Activated CD4-positive, alpha-beta T cell treated with anti-CD3 and anti-CD28 coated beads, Interleukin-2, amount 10 ng/mL, durations not matched to agents 24 days and 14 days (primary cell): ENCODE measurements at regions of chr10 and their contacts with region 1.

Region 1: DNA sequence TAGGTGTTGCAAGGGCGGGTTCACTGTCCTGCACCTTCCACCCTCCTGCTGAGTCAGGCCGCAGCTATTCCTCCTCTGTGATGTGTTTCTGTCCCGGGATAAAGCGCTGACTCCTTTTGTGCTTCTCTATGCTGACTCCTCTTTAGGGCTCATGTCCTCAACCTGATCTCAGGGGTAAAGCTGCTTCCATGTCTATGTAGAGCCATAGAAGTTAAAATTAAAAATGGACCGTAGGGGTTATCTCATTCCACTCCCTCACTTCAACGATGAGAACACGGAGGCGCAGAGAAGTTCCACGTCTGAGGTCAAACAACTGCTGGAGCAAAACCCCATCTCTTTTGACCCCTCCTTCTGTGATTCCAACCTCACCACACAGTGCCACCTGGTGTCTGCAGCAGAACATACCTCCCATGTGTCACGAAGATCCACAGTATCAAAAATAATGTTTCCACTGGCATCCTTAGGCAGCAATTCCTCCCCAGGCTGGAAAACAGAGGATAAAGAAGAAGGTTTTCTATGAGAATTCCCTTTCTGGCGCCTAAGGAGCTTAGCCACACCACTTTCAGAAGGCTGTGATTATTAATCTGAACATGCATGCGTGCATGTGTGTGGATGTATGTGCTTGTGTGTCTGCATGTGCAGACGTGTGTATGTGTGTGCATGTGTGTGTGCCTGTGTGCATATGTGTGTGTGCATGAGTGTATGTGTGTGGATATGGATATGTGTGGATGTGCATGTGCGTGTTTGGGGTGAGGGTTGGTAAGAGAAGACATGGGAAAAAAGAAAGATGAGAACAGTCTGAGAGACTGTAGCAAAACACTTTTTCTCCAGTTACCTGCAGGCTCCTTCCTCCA is 81.2 kb upstream of the UCN3 start:
- DNase-seq: peak; percentile 89
- H3K4me3 Mint-ChIP-seq: peak overlapping the region; percentile 44
- H3K27ac Mint-ChIP-seq: peak overlapping the region; percentile 82
- H3K4me1 Mint-ChIP-seq: peaks cover 29% of the 10 kb centered on the region
- H3K27me3 Mint-ChIP-seq: peaks cover 5% of the 10 kb centered on the region

Region 2: GRCh38 chr10:5094265-5095205 is 189.0 kb before region 1 on chr10 and contains the start of gene AKR1C3:
- intact Hi-C with region 1: loop called (anchors 5 kb)
- DNase-seq: peak; percentile 74
- H3K4me3 Mint-ChIP-seq: peak within 1 kb of the TSS; percentile 56
- H3K27ac Mint-ChIP-seq: no peak within 1 kb of the TSS
- H3K4me1 Mint-ChIP-seq: peaks cover 5% of the 10 kb centered on the region
- H3K27me3 Mint-ChIP-seq: peaks cover 12% of the 10 kb centered on the region
- total RNA-seq, gene AKR1C3: not detected in 2 replicates

Region 3: DNA sequence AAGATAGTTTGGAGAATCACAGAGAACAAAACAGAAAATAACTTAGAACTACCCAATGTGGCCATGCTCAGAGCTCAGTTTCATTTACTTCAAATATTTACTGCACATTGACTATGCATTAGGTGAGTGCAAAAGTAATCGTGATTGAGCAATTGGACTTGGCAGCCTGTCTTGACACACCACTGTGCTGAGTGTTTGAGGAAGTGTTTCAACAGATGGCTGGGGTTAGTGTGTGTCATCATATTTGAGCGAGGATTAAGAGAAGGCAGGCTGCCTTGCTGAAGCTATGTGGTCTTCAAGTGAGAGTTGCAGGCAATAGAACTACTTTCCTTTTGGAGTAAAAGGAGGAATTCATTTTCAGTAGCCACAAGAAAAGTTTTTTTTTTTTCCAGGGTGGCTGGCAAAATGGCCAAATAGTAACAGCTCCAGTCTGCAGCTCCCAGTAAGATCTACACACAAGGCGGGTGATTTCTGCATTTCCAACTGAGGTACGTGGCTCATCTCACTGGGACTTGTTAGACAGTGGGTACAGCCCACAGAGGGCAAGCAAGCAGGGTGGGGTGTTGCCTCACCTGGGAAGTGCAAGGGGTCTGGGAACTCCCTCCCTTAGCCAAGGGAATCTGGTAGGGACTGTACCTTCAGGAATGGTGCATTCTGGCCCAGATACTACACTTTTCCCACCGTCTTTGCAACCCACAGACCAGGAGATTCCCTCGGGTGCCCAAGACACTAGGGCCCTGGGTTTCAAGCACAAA is 49.2 kb before region 1 on chr10:
- intact Hi-C with region 1: no loop called
- DNase-seq: no peak
- H3K4me3 Mint-ChIP-seq: no peak overlapping the region
- H3K27ac Mint-ChIP-seq: no peak overlapping the region
- H3K4me1 Mint-ChIP-seq: no peaks in the 10 kb centered on the region
- H3K27me3 Mint-ChIP-seq: no peaks in the 10 kb centered on the region

Region 4: DNA sequence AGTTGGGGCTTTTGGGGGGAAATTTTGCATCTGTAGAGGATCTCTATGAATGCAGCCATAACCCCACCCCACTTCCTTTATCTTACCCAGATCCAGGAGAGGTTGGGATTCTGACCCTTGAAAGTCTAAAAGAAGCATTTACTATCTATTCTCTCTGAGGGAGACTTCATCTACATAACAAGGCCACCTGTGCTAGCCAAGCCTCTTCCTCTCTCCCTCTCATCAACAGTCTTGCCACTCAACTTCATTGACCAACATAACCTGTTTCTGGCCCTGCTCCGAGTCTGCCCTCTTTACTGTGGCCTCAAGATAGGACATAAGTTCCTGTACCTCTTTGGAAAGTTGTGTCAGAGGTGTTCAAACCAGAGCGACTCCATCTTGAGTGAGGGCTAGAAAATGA is 101.7 kb after region 1 on chr10:
- intact Hi-C with region 1: loop called (anchors 5 kb)
- DNase-seq: no peak
- H3K4me3 Mint-ChIP-seq: no peak overlapping the region
- H3K27ac Mint-ChIP-seq: no peak overlapping the region
- H3K4me1 Mint-ChIP-seq: no peaks in the 10 kb centered on the region
- H3K27me3 Mint-ChIP-seq: no peaks in the 10 kb centered on the region